K562 (cell line): ENCODE measurements at regions of chr12 and their contacts with region 1.

Region 1: DNA sequence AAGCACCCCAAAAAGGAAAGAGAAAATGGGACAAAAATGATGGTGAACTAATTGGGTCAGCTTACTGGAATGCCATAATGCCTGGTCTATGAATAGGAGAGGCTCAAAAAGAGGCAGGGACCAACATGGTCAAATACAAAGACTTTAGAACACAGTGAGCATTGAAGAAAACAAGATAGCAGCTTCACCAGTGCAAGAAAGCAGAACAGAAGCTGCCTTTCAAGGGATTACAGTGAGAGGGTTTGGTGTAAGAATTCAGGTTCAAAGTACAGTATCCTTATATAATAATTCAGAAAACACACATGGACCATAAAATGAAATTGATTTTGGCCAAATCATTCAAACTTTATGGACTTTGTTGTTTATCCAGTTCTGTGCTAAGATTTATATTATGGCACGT is 162.1 kb downstream of the NAV3 start:
- DNase-seq: no peak
- ATAC-seq: no peak
- H3K4me3 ChIP-seq: no peak overlapping the region
- H3K27ac ChIP-seq: no peak overlapping the region
- H3K4me1 ChIP-seq: no peaks in the 10 kb centered on the region
- H3K27me3 ChIP-seq: no peaks in the 10 kb centered on the region
- CTCF ChIP-seq: no peak
- EP300 ChIP-seq: no peak
- POLR2A ChIP-seq: no peak
- RAD21 ChIP-seq: no peak

Region 2: GRCh38 chr12:78392918-78393317 is 400.2 kb after region 1 on chr12:
- CTCF ChIA-PET with region 1: no interaction called
- POLR2A ChIA-PET with region 1: no interaction called
- in situ Hi-C with region 1: no loop called
- intact Hi-C with region 1: loop called (anchors 5 kb)
- DNase-seq: no peak
- ATAC-seq: no peak
- H3K4me3 ChIP-seq: no peak overlapping the region
- H3K27ac ChIP-seq: no peak overlapping the region
- H3K4me1 ChIP-seq: no peaks in the 10 kb centered on the region
- H3K27me3 ChIP-seq: no peaks in the 10 kb centered on the region
- CTCF ChIP-seq: no peak
- EP300 ChIP-seq: no peak
- POLR2A ChIP-seq: no peak
- RAD21 ChIP-seq: no peak